Posterior cingulate gyrus (tissue), 11 donors: ENCODE measurements at regions of chr11 and their contacts with region 1.

Region 1: DNA sequence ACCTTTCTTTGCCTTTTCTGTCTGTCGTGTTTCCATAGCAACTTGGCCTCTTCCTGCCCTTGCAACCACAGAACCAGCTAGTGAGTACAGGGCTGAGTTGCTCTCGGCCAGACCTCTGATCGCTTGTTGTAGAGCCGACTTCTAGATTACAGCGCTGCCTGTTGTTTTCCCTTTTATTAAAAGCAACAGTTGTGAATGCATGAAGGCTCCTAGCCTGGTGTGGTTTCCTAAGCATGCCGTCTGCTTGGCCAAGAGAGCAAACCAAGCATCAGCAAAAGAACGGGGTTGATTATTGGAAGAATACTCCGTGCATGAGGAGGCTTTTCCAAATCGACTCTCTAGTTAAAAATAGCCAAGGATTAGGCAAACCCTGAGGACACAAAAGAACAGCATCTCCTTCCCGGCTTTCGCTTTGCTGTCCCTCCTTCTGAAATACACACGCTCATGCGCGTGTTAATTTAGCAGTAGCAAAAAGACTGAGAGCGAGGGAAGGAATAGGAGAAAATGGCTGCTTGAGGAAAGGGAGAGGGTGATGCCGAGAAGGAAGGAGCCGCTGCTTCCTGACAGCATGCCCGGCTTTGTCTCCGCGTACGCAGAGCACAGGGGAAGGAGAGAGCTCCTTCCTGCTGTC is 71.5 kb upstream of the TTC12 start:
- DNase-seq: peak in 6 of 10 donors; percentile 22 to 88 (median 40)

Region 2: GRCh38 chr11:113167595-113167994 is 75.3 kb before region 1 on chr11:
- intact Hi-C with region 1: loop called (anchors 5 kb)
- DNase-seq: peak in 4 of 10 donors; percentile 42 to 89 (median 67)

Region 3: DNA sequence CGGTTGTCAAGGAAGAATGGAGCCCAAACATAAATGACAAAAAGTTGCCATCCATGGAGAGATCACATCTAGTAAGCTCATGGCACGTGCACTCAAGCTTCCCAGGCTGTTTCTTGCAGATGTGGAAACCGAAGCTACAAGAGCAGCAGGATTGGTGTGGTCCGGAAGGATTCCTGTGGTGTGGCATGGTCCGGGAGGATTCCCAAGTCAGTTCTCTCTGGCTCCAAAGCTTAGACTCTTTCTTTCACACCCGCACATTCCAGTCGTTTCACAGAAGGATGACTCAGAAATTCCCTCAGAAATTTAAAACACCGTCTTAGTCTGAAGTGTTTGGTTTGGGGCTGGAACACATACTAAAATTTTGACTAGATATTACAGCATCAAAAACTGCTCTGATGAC is 310.4 kb after region 1 on chr11:
- intact Hi-C with region 1: no loop called
- DNase-seq: no peak